Activated CD8-positive, alpha-beta memory T cell treated with anti-CD3 and anti-CD28 coated beads, Interleukin-2, amount 10 ng/mL, durations not matched to agents 7 days and 5 days (primary cell): ENCODE measurements at regions of chr9 and their contacts with region 1.

Region 1: GRCh38 chr9:99824378-99825171 is 2.9 kb downstream of the NR4A3 start:
- DNase-seq: peak; percentile 85
- ATAC-seq: peak; percentile 5
- H3K4me3 Mint-ChIP-seq: peak overlapping the region; percentile 94
- H3K27ac Mint-ChIP-seq: peak overlapping the region; percentile 28
- H3K4me1 Mint-ChIP-seq: peaks cover 46% of the 10 kb centered on the region
- H3K27me3 Mint-ChIP-seq: peaks cover 28% of the 10 kb centered on the region

Region 2: GRCh38 chr9:99752417-99753109 is 72.0 kb before region 1 on chr9:
- CTCF ChIA-PET with region 1: no interaction called
- DNase-seq: no peak
- ATAC-seq: no peak
- H3K4me3 Mint-ChIP-seq: no peak overlapping the region
- H3K27ac Mint-ChIP-seq: no peak overlapping the region
- H3K4me1 Mint-ChIP-seq: no peaks in the 10 kb centered on the region
- H3K27me3 Mint-ChIP-seq: peaks cover 18% of the 10 kb centered on the region

Region 3: DNA sequence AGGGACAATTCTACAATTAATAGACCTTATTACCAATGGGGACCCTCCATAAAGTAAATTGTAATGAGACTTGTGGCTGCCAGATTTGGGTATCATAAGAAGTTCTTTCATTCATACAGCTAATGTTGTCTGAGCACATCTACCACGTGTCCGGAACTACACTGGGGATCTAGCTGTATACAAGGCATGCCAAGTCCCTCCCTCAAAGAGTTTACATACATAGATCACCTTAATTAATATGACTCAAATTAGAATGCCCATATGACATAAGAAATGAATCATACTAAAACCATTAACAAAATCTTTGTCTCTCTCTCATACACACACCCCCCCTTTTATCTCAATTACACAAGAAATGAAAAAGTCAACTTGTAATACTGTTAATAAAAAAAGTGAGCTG is 20.9 kb before region 1 on chr9:
- CTCF ChIA-PET with region 1: no interaction called
- DNase-seq: no peak
- ATAC-seq: no peak
- H3K4me3 Mint-ChIP-seq: no peak overlapping the region
- H3K27ac Mint-ChIP-seq: no peak overlapping the region
- H3K4me1 Mint-ChIP-seq: peaks cover 11% of the 10 kb centered on the region
- H3K27me3 Mint-ChIP-seq: no peaks in the 10 kb centered on the region

Region 4: DNA sequence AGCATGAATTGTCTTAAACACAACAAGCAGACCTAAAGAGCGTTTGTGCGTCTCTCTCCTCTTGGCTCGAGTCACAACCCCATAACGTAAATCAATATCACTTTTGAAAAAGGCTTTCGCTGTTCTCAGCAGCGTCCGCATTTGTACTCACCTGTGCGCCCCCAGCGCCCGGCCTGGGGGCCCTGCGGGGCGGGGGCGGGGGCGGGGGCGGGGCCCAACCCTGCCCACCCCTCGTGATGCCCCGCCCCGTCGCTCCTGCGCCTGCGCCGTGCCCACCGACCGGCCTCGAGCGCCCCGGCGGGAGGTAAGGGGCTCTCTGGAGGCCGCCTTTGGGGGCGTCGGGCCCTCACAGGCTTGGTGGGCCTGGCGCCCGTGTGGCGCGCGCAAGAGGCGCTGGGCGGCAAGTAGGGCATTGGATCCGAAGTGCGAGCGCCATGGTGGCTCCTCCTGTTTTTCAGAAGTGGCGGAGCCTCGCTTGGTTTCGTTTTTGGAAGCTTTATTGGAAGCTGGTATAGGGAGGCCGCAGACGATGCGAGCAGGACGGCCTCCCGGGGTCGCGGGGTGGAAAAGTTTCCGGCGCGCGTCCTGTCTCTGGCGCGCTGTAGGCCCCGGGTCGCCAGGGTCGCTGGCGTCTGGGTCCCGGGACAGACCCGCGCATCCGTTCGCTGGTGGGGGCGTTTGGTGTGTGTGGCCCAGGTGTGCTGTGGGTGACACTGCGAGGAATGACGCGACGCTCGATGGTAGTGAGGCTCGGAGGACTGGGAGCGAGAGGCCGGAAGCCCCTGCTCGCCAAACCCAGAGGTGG is 82.0 kb after region 1 on chr9 and contains the start of gene STX17:
- CTCF ChIA-PET with region 1: interaction called, 11 read pairs
- DNase-seq: peak; percentile 84
- ATAC-seq: peak; percentile 87
- H3K4me3 Mint-ChIP-seq: peak within 1 kb of the TSS; percentile 93
- H3K27ac Mint-ChIP-seq: peak within 1 kb of the TSS; percentile 90
- H3K4me1 Mint-ChIP-seq: peaks cover 28% of the 10 kb centered on the region
- H3K27me3 Mint-ChIP-seq: peaks cover 10% of the 10 kb centered on the region
- total RNA-seq, gene STX17: 32.0 to 37.0 TPM

Region 5: DNA sequence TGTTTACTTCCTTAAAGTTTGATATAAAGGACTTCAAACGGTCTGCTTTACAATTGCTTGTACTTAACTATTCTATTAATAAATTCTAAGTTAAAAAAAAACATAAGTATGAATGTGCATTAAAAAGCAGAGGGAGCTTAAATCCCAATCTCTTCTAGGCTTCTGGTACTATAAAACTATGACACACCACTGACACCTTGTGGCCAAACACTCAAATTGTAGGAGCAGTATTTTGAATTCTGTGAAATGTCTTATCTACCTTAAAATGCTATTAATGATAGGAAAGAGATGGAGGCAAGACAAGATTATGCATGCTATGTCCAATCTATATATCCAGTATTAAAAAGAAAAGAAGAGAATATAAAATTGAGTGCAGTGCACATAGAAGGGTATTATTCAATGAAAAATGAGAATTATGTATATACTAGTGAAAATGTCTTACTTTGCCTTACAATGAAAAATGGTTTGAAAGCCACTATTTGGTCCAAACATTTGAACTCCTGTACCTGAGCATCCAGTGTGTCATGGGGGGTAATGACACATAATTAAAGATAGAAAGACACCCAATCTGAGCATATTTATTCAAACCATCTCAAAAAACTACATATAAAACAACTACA is 186.6 kb after region 1 on chr9:
- CTCF ChIA-PET with region 1: interaction called, 30 read pairs
- DNase-seq: peak; percentile 50
- ATAC-seq: peak; percentile 42
- H3K4me3 Mint-ChIP-seq: no peak overlapping the region
- H3K27ac Mint-ChIP-seq: no peak overlapping the region
- H3K4me1 Mint-ChIP-seq: peaks cover 2% of the 10 kb centered on the region
- H3K27me3 Mint-ChIP-seq: no peaks in the 10 kb centered on the region